SK-N-SH (cell line): ENCODE measurements at regions of chr6 and their contacts with region 1.

Region 1: GRCh38 chr6:152897799-152898399 is 84.9 kb downstream of the FBXO5 start:
- DNase-seq: peak; percentile 63
- H3K4me3 ChIP-seq: no peak overlapping the region; a peak in 1 of 4 replicates
- H3K27ac ChIP-seq: no peak overlapping the region
- H3K4me1 ChIP-seq: peaks cover 0 to 3% of the 10 kb centered on the region in 2 experiments; a peak in 2 of 4 replicates
- H3K27me3 ChIP-seq: no peaks in the 10 kb centered on the region
- CTCF ChIP-seq: peak; percentile 76
- EP300 ChIP-seq: no peak
- RAD21 ChIP-seq: peak; percentile 68

Region 2: GRCh38 chr6:152909241-152909640 is 11.3 kb after region 1 on chr6:
- CTCF ChIA-PET with region 1: interaction called, 13 read pairs
- POLR2A ChIA-PET with region 1: no interaction called
- DNase-seq: no peak
- H3K4me3 ChIP-seq: no peak overlapping the region
- H3K27ac ChIP-seq: no peak overlapping the region
- H3K4me1 ChIP-seq: no peaks in the 10 kb centered on the region
- H3K27me3 ChIP-seq: no peaks in the 10 kb centered on the region
- CTCF ChIP-seq: no peak
- EP300 ChIP-seq: no peak
- RAD21 ChIP-seq: no peak

Region 3: DNA sequence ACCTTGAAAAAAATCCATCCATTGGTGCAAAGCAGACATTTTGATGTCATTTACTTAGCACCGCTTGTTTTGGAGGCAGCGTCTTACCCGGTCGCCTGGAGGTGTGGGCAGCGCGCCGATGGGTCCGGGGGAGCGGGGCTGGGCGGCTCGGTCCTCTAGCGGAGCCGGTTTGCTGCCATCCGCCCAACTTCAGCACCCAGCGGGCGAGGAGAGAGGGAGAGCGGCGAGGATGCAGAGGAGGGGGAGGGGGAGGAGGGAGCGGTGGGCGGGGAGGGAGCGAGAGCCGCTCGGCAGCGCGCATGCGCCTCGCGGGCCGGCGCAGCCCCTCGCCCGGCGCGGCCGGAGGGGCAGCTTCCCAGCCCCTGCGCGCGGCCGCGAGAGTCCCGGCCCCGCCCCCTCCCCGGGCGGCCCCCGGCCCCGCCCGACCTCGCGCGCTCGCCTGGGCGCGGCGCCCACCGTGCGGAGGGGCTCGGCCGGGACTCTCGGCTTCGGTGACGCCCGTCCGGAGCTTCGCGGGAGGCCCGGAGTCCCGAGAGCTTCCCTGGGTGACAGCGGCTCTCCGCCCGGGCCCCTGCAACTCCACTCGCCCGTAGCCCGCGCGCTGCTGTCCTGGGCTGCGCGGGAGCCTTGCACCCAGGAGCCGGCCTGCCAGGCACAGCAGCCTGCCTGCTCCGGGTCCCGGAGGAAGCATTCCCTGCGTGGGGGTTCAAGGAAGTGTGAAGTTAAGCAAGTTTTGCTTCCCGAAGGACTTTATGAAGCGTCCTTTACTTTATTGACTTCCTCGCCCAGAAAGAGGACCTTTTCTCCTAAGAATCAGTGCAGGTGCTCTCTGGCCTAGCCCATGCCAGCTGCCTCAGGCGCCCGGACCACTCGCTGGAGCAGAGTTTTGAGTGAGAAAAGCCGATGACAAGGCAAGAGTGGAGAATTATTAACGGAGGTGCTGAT is 233.4 kb after region 1 on chr6 and contains the start of gene RGS17:
- CTCF ChIA-PET with region 1: no interaction called
- POLR2A ChIA-PET with region 1: no interaction called
- DNase-seq: peak; percentile 100
- H3K4me3 ChIP-seq: peak within 1 kb of the TSS; percentile 81 to 89
- H3K27ac ChIP-seq: peak within 1 kb of the TSS; percentile 29 to 92; a peak in 3 of 4 replicates
- H3K4me1 ChIP-seq: peaks cover 0 to 6% of the 10 kb centered on the region in 2 experiments; a peak in 2 of 4 replicates
- H3K27me3 ChIP-seq: no peaks in the 10 kb centered on the region
- CTCF ChIP-seq: no peak
- EP300 ChIP-seq: no peak
- RAD21 ChIP-seq: no peak
- polyA plus RNA-seq, gene RGS17: 1.3 and 1.4 TPM in 2 replicates

Region 4: DNA sequence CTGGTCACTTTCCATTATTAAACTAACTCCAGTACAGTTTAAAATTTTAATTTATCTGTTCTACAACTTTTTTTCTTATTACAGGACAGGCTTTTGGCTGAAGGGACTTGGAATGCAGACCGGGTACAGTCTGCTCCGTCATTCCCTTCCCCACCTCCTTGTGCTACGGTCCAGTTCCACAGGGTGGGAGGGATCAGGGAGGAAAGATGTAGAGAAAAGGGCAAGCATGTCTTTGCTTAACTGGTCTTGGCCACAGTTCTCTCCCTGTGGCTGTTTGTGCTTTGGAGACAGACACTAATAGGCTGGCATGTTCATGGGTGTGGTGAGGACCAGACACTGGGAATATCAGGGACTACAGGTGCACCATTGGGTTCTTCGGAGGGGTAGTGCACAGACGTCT is 245.3 kb after region 1 on chr6:
- CTCF ChIA-PET with region 1: no interaction called
- POLR2A ChIA-PET with region 1: no interaction called
- DNase-seq: no peak
- H3K4me3 ChIP-seq: no peak overlapping the region
- H3K27ac ChIP-seq: no peak overlapping the region
- H3K4me1 ChIP-seq: peaks cover 0 to 11% of the 10 kb centered on the region in 2 experiments; a peak in 2 of 4 replicates
- H3K27me3 ChIP-seq: no peaks in the 10 kb centered on the region
- CTCF ChIP-seq: no peak
- EP300 ChIP-seq: no peak
- RAD21 ChIP-seq: no peak